Calu3 (cell line): ENCODE measurements at regions of chr5 and their contacts with region 1.

Region 1: DNA sequence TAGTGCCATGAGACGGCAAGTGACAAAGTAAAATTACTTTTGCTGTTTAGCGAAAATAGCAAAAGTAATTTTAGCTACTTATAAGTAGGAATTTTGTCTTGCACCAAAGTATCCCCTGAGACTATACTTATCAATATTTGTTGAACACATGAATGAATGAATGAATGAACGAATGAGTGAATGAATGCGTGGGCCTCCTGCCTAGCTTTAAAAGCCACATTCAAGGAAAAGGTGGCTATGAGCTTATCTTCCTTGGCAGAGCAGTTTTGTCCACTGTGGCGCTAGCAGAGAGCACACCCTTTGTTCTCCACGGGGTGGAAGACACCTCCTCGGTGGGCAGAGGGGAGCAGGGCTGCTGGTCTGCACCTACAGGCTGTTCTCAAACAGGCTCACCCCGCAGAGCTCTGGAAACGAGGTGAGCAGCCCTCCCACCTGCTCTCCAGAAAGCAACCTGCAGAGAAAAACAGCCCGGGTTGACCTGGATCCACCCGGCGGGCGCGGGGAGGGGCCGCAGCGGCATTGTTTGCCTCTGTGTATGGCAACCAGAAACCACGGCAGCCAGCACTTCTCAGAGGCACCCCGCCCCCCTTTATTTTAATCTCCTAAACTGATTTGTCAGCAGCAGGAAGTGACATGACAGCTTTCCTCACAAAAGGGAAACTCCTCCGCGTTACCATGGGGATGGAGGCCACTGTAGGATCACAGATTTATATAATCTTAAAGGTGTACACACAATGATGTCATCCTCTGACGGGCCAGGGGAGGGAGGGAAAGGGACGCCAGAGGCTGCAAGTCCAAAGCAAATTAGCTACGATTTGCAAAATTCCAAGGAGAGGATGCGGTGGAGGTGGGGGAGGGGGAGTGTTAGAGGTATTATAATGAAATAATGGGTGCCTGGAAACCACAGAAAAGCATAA is 5.9 kb downstream of the DUSP1 start:
- DNase-seq: peak; percentile 98
- H3K4me3 Mint-ChIP-seq: peak overlapping the region; percentile 74
- H3K27ac Mint-ChIP-seq: peak overlapping the region; percentile 75
- H3K4me1 Mint-ChIP-seq: peaks cover 61% of the 10 kb centered on the region
- H3K27me3 Mint-ChIP-seq: no peaks in the 10 kb centered on the region
- CTCF ChIP-seq: no peak

Region 2: GRCh38 chr5:172450861-172451695 is 314.0 kb before region 1 on chr5:
- CTCF ChIA-PET with region 1: interaction called, 11 read pairs
- intact Hi-C with region 1: no loop called
- DNase-seq: peak; percentile 63
- H3K4me3 Mint-ChIP-seq: no peak overlapping the region
- H3K27ac Mint-ChIP-seq: peak overlapping the region; percentile 61
- H3K4me1 Mint-ChIP-seq: peaks cover 31% of the 10 kb centered on the region
- H3K27me3 Mint-ChIP-seq: no peaks in the 10 kb centered on the region
- CTCF ChIP-seq: peak; percentile 72

Region 3: DNA sequence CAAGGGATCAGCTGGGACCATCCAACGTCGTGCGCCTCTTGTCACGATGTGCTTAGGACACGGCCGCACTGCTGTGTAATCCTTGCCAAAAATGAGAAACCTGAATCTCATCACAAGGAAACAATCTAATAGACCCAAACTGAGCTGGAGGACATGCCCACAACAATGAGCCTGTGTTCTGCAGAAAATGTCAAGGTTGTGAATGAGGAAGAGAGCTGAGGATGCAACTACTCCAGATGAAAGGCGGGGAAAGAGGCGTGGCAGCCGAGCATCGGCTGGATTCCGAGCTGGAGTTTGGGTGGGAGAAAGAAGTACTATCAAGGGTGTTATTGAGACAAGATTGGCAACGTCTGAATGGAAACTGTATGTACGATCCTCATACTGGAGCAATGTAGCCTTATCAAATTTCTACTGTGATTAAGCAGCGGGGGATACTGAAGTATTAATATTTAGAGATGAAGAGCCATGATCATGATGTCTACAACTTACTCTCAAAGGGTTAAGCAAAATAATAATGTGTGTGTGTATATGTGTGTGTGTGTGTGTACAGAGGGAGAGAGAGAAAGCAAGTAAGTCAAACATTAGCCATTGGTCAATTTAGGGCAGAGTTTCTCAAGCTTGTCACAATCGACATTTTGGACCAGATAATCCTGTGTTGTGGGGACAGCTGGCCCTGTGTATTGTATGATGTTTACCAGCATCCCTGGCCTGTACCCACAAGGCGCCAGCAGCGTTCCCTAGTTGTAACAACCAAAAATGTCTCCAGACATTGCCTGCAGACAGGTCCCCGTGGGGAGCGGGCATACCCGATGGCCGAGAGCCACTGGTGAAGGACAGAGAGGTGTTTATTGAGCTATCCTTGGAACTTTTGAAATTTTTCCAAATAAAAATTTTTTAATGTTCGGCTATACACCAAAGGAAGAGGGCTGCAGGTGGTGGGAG is 40.6 kb before region 1 on chr5:
- CTCF ChIA-PET with region 1: interaction called, 12 read pairs
- intact Hi-C with region 1: no loop called
- DNase-seq: no peak
- H3K4me3 Mint-ChIP-seq: no peak overlapping the region
- H3K27ac Mint-ChIP-seq: no peak overlapping the region
- H3K4me1 Mint-ChIP-seq: peaks cover 12% of the 10 kb centered on the region
- H3K27me3 Mint-ChIP-seq: peaks cover 13% of the 10 kb centered on the region
- CTCF ChIP-seq: no peak

Region 4: GRCh38 chr5:172733131-172733973 is 31.8 kb before region 1 on chr5:
- CTCF ChIA-PET with region 1: interaction called, 10 read pairs
- intact Hi-C with region 1: loop called (anchors 2 kb)
- DNase-seq: peak; percentile 64
- H3K4me3 Mint-ChIP-seq: peak overlapping the region; percentile 1
- H3K27ac Mint-ChIP-seq: peak overlapping the region; percentile 78
- H3K4me1 Mint-ChIP-seq: peaks cover 38% of the 10 kb centered on the region
- H3K27me3 Mint-ChIP-seq: no peaks in the 10 kb centered on the region
- CTCF ChIP-seq: no peak

Region 5: DNA sequence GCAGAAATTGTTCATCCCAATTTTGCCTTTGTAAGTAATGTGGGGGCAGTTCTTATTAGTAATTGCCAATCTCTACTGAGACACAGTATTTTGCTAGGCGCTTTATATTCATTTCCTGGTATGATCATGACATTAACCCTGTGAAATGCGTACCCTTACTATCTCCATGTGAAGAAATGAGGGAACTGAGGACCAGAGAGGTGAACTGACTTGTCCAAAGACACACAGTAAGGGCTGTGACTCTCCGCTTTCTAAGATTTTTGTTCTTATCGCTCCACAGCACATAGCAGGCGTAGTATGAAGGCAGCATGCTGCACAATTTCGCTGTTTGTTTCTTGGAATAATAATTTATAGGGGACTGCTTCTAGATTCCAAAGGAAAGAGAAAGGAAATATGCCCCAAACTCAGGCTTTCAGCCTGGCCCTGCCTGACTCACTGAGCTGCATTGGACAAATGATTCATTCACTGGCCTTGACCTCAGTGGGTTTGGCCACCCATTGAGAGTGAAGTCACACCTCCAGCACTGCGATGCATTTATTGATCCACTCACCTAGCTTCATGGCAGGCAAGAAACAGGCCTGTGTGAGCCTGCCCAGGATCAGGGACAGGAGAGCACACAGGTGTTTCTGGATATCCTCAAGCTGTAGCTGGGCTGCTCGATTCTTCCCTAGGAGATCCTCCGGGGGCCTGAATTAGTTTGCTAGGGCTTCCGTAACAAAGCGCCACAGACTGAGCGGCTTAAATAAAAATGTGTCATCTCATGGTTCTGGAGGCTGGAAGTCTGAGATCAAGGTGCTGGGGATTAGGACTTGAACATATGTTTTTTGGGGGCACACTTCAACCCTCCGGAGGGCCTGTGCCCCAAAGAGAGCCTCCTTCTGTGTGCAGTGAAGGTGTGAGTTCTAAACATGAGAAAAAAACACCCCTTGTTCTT is 13.0 kb after region 1 on chr5:
- CTCF ChIA-PET with region 1: interaction called, 19 read pairs
- intact Hi-C with region 1: no loop called
- DNase-seq: peak; percentile 90
- H3K4me3 Mint-ChIP-seq: peak overlapping the region; percentile 68
- H3K27ac Mint-ChIP-seq: peak overlapping the region; percentile 98
- H3K4me1 Mint-ChIP-seq: peaks cover 51% of the 10 kb centered on the region
- H3K27me3 Mint-ChIP-seq: no peaks in the 10 kb centered on the region
- CTCF ChIP-seq: no peak